ENCODE measurements at regions of chr2 and their contacts with region 1.

Region 1: GRCh38 chr2:6877402-6878304 is at the start of gene RSAD2:
- DNase-seq: peak; percentile 58
- H3K4me3 Mint-ChIP-seq: peak within 1 kb of the TSS; percentile 87
- H3K27ac Mint-ChIP-seq: peak within 1 kb of the TSS; percentile 89
- H3K4me1 Mint-ChIP-seq: peaks cover 60% of the 10 kb centered on the region
- H3K27me3 Mint-ChIP-seq: peaks cover 2% of the 10 kb centered on the region
- total RNA-seq, gene RSAD2: 119 to 120 TPM

Region 2: DNA sequence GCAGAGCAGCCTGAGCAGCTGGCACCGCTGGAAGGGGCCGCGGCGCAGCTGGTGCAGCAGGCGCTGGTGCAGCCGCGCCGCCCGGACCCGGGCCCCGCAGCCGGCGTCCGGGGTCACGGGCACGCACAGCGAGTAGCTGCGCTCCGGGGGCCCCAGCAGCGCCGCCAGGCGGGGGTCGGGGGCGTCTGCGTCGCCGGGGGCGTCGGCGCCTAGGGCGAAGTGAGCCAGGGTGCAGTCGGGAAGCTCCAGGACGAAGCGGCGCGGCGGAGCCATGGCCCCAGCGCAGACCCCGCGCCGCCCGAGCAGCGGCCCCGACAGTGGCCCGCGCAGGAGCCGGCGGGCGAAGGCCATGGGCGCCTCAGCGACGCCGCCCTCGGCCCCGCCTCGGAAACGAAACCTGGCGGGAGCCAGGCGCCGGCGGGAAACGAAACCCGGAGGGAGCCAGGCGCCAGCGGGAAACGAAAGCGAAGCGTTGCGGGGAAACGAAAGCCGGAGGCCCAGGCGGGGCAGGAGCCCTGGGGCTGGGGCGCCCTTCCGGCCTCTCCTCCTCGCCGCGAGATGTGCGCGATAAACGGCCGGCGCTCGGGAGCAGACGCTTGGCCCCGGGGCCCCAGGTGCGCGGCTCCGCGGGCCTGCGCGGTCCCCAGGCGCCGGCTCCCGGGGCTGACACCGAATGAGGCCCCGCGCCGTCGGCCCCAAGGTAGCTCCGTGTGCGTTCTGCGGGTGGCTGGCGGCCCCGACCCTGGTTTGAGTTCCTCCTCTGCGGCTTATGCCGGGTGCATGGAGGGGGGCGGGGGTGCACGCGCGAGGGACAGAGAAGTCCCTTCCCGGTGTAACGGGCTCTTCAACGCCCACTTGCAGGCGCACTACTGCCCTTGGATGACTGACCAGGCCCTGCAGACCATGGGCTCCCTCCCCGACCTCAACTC is 12.0 kb before region 1 on chr2 and contains the start of gene CMPK2:
- CTCF ChIA-PET with region 1: interaction called, 143 read pairs
- POLR2A ChIA-PET with region 1: interaction called, 221 read pairs
- DNase-seq: peak; percentile 94
- H3K4me3 Mint-ChIP-seq: peak within 1 kb of the TSS; percentile 97
- H3K27ac Mint-ChIP-seq: peak within 1 kb of the TSS; percentile 99
- H3K4me1 Mint-ChIP-seq: peaks cover 55% of the 10 kb centered on the region
- H3K27me3 Mint-ChIP-seq: no peaks in the 10 kb centered on the region
- total RNA-seq, gene CMPK2: 84.8 to 91.1 TPM

Region 3: DNA sequence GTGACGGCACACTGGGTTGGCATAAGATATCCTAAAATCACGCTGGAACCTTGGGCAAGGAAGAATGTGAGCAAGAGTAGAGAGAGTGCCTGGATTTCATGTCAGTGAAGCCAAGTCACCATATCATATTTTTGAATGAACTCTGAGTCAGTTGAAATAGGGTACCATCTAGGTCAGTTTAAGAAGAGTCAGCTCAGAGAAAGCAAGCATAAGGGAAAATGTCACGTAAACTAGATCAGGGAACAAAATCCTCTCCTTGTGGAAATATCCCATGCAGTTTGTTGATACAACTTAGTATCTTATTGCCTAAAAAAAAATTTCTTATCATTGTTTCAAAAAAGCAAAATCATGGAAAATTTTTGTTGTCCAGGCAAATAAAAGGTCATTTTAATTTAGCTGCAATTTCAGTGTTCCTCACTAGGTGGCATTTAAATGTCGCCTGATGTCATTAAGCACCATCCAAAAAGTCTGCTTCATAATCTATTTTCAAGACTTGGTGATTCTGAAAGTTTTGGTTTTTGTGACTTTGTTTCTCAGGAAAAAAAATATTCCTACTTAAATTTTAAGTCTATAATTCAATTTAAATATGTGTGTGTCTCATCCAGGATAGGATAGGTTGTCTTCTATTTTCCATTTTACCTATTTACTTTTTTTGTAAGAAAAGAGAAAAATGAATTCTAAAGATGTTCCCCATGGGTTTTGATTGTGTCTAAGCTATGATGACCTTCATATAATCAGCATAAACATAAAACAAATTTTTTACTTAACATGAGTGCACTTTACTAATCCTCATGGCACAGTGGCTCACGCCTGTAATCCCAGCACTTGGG is 19.5 kb after region 1 on chr2:
- CTCF ChIA-PET with region 1: interaction called, 13 read pairs
- POLR2A ChIA-PET with region 1: interaction called, 3 read pairs
- DNase-seq: no peak
- H3K4me3 Mint-ChIP-seq: no peak overlapping the region
- H3K27ac Mint-ChIP-seq: no peak overlapping the region
- H3K4me1 Mint-ChIP-seq: peaks cover 4% of the 10 kb centered on the region
- H3K27me3 Mint-ChIP-seq: peaks cover 4% of the 10 kb centered on the region

Region 4: GRCh38 chr2:6917071-6917760 is 39.6 kb after region 1 on chr2 and contains the start of gene RNF144A:
- CTCF ChIA-PET with region 1: interaction called, 29 read pairs
- POLR2A ChIA-PET with region 1: interaction called, 21 read pairs
- DNase-seq: peak; percentile 72
- H3K4me3 Mint-ChIP-seq: peak within 1 kb of the TSS; percentile 60
- H3K27ac Mint-ChIP-seq: peak within 1 kb of the TSS; percentile 59
- H3K4me1 Mint-ChIP-seq: peaks cover 44% of the 10 kb centered on the region
- H3K27me3 Mint-ChIP-seq: peaks cover 40% of the 10 kb centered on the region
- total RNA-seq, gene RNF144A: 20.0 to 21.0 TPM

Measured in activated CD4-positive, alpha-beta memory T cell treated with anti-CD3 and anti-CD28 coated beads, Interleukin-2, amount 10 ng/mL, durations not matched to agents 7 days and 5 days (primary cell).